Posterior vena cava (tissue), 2 donors: ENCODE measurements at regions of chr1 and their contacts with region 1.

Region 1: DNA sequence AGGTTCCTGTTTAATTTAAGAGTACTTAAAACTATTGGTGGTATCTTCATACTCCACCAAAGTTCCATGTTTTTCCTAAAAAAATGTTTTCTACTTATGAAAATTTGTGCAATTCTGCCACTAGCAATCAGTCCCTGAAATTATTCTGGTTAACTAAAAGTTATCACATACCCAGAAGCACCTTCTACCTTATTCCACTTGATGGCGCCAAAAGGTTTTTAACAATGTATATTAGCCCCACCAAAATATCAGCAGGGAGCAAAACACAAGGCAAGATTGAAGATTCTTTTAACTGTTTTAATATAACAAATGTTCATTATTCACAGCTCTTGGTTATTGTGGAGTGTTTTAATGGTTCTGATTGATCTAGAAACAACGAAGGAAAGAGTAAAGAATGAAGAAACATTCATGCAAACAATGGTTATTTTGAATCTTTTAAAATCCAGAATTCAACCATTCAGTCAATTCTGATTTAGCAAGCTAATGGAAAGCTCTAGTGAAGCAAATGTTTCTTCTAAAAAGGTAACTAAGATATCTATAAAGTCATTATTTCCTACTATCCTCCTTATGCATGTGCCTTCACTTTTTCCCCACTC is 67.2 kb downstream of the TTLL7 start:
- DNase-seq: no peak

Region 2: DNA sequence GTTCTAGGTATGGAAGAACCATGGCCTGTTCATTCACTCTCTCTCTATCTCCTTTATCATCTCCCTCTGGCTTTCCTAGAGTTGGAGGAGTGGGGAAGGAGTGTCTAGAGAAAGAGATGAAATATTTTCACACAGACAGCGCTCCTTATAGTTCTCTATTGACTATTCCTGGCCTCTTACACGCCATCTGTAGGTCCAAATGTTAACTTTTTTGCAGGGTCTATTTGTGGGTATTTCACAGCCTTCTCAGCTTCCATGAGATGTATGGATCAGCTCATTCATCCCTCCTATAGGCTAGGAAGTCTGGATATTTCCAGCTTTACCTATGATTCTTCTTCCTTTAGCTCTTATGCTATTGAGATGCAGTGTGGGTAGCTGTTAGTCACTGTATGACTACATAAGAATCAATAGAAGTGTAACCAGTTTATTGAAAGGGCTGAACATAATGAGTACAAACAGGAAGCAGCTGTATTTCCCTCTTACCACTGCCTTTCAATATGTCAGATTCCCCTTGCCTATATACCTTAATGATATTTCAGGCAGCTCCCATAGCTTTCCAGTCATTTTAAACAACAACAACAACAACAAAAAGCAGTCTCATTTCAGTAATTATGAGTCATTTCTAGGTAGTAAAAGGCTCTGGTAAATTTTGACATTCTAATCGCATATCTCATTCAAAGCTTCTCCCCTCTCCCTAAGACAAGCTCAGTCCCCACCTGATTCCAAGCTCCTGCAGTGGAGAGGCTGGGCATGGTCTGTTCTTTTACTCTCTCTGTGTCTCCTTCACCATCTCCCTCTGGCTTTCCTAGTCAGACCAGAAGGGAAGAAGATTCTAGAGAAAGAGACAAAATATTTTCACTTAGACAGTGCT is 82.3 kb before region 1 on chr1:
- intact Hi-C with region 1: no loop called
- DNase-seq: no peak

Region 3: DNA sequence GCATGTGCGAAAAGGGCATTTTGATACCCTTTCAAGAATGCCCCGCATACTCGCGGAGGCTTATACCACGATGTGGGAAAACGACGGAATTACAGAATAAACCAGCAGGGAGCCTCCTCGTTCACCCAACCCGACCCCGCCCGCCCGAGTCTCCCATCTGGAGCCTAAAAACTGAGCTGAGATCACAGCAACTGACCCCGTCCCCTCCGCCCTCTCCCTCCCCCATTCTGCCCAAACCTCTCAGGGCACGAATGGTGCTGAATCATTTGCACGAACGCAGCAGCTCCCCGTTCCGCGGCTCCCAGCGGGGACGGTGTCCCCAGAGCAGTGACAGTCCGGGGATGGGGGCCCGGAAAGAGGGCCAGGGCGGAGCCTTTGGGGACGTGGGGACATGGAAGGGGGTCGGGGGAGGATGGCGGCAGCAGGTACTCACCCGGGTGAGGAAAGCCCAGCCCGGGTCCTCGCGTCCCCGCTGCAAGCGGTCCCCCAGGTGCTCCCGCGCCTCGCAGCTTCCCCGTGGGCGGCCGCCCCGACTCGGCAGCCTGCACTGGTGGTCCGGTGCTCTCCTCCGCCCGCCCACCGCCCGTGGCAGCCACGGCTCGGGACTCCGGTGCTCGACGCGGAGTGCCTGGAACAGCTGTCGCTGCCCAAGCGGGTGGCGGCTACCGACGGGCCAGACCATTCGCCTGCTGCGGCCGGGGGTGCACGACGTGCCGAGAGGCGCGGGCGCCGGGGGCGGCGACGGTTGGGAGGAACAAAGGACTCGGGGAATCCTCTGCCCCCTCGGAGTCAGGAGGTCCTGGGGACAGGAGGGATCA is 67.0 kb after region 1 on chr1 and contains the start of gene TTLL7:
- intact Hi-C with region 1: loop called in 1 of 2 experiments (anchors 10 kb)
- DNase-seq: peak; percentile 92
- total RNA-seq, gene TTLL7: 47.0 to 48.1 TPM

Region 4: GRCh38 chr1:84117868-84118267 is 186.1 kb after region 1 on chr1:
- intact Hi-C with region 1: loop called in 1 of 2 experiments (anchors 5 kb)
- DNase-seq: no peak

Region 5: DNA sequence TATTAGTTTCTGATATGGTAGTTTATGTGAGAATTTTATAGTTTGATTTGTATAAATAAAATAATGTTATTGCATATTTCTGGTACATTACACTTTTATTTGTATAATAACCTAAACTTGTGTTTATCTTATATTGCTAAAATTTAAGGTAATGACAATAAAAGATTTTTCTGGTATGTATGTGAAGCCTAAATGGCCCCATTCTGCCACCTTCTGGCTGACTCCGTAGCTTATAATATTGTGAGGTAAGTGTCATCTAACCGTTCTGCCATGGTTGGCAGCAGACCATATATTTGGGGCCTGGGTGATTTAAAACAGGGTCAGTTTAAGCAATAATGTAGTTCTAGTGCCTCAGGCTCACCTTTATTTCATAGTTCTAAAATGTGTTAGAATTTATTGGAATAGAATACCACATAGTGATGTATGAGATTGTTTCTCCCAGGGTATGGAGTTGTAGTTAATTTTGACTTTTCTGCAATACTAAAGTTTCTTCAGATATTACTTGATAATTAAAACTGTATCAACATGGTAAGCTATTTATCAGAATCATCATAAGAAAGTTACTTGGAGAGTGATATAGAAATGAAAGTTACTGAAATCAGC is 191.1 kb after region 1 on chr1:
- intact Hi-C with region 1: loop called (anchors 5 kb)
- DNase-seq: no peak

Region 6: DNA sequence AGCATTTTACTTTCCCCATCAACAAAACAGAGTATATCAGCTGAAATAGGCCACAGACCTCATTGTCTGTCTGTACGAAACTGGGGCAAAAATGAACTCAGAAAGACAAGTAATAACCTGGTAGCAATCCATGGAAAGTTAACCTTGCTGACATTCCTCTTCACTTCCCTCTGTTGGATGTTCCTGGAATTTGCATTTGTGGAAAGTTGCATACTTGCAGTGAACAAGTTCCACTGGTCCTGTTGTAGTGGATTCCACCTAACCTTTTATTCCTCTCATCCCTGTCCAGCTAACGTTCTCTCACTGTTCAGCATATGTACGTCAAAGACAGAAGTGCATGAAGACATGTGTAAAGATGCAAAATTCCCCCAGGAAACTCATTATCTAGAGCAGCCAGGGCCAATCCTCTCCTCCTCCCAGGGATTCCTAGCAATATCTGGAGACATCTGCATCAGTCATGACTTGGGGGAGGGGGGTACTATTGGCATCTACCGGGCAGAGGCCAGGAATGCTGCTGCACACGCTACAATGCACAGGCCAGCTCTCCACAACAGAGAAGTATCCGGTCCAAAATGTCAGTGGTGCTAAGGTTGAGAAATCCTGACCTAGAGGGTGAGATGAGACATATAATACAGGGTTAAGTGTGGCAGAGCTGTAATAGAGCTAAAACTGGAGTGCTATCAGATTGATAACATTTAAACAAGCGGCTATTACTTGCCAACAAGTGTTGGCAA is 953.1 kb after region 1 on chr1:
- intact Hi-C with region 1: no loop called
- DNase-seq: no peak